Activated naive CD4-positive, alpha-beta T cell treated with anti-CD3 and anti-CD28 coated beads for 36 hours (primary cell): ENCODE measurements at regions of chr11 and their contacts with region 1.

Region 1: DNA sequence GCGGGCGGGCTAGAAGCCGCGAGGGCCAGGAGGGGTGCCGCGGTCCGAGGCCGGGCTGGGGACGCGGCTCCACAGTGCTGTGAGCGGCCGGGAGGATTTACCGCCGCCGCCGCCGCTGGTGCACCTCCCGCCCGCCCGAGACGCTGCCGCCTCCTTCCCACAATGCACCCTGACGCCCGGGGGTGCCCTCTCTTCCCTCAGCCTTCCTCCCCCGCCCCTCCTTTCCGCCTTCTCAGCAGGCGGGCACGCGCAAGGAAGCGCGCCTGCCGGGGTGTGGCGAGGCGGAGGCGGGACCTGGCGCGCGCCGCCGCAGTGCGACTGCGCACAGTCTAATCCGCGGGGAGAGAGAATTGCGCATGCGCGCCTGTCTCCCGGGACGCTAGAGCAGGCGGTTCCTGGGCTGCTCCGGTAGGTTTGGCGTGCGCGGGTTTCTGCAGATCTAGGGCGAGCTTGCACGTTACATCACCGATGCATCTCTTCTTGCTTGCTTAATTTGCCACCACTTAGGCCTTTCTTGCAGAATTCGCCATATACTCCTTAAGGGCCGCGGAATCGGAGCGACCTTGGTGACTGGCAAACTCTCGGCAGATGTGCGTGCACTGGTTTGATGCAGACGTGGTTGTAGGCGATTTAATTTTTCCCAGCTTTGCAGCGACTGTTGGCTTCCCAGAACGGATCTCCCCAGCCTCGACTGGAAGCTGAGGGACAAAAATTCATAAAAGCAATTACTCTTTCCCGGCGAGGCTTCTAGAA is at the starts of genes GVQW3 and THAP12:
- DNase-seq: peak; percentile 97
- H3K4me3 Mint-ChIP-seq: peak within 1 kb of the TSS; percentile 91
- H3K27ac Mint-ChIP-seq: peak within 1 kb of the TSS; percentile 91
- H3K4me1 Mint-ChIP-seq: peaks cover 58% of the 10 kb centered on the region
- H3K27me3 Mint-ChIP-seq: no peaks in the 10 kb centered on the region
- total RNA-seq, gene GVQW3: 1.7 to 2.1 TPM
- total RNA-seq, gene THAP12: 39.4 to 40.6 TPM

Region 2: DNA sequence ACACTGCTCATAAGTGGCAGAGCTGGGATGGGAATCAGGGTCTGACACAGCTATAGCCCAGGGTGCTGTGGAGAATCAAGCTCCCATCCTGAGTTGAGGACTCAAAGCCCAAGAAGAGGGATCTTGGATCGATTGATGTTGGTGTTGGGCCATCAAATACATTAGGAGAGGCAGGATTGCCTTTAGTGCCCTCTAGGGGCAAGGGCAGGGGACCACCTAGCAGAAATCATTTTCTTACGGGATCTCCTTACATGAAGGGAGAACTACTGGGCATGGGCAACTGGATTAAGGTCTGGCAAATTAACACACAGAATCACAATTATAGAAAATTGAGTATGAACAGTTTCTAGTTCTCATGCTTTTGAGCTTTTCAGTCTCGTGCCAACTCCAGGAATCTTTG is 38.8 kb after region 1 on chr11:
- CTCF ChIA-PET with region 1: no interaction called
- intact Hi-C with region 1: loop called (anchors 5 kb)
- DNase-seq: peak; percentile 32
- H3K4me3 Mint-ChIP-seq: no peak overlapping the region
- H3K27ac Mint-ChIP-seq: no peak overlapping the region
- H3K4me1 Mint-ChIP-seq: peaks cover 7% of the 10 kb centered on the region
- H3K27me3 Mint-ChIP-seq: peaks cover 5% of the 10 kb centered on the region

Region 3: GRCh38 chr11:76480241-76480640 is 99.1 kb after region 1 on chr11:
- CTCF ChIA-PET with region 1: no interaction called
- intact Hi-C with region 1: no loop called
- DNase-seq: no peak
- H3K4me3 Mint-ChIP-seq: no peak overlapping the region
- H3K27ac Mint-ChIP-seq: no peak overlapping the region
- H3K4me1 Mint-ChIP-seq: peaks cover 12% of the 10 kb centered on the region
- H3K27me3 Mint-ChIP-seq: no peaks in the 10 kb centered on the region

Region 4: DNA sequence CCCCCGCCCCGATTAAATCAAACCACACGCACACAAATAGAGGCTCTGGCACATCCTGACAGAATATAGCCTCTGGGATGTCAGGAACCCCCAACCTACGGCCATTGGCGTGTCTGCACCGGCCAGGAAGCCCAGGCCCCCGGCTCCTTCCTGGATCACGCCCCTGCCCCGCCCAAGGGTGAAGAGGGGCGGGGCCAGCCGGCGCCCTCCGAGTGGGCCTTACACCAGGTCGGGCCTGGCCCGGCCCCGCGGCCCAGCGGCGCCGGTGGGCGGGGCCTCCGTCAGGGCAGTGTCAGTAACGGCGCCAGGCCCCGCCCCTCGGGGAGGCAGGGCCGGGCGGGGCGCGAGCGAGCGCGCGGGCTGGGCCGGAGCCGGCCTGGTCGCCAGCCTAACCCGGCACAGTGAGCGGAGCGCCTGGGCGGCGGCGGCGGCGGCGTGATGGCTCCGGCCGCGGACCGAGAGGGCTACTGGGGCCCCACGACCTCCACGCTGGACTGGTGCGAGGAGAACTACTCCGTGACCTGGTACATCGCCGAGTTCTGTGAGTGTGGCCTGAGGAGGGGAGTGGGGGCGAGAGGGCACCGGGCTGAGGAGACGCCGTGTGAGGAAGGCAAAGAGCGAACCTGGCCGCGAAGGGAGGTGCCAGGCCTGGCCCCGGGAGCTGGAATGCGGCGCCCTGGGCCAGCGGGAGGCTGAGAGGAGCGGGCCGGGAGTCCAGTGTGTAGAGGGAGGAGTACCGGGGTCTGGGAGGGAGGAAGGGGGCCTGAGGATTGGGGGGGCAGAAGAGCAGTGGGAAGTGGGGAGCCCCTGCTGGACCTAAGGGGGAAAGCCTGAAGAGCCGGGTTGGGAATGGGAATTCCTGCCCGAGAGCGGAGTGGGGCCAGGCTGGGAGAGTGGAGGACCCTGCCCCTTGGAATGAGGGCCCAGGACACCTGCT is 479.7 kb after region 1 on chr11 and contains the start of gene ACER3:
- CTCF ChIA-PET with region 1: no interaction called
- intact Hi-C with region 1: loop called (anchors 5 kb)
- DNase-seq: peak; percentile 85
- H3K4me3 Mint-ChIP-seq: peak within 1 kb of the TSS; percentile 87
- H3K27ac Mint-ChIP-seq: no peak within 1 kb of the TSS
- H3K4me1 Mint-ChIP-seq: peaks cover 14% of the 10 kb centered on the region
- H3K27me3 Mint-ChIP-seq: no peaks in the 10 kb centered on the region
- total RNA-seq, gene ACER3: 7.6 to 10.0 TPM